Naive thymus-derived CD4-positive, alpha-beta T cell (primary cell): ENCODE measurements at regions of chr12 and their contacts with region 1.

Region 1: DNA sequence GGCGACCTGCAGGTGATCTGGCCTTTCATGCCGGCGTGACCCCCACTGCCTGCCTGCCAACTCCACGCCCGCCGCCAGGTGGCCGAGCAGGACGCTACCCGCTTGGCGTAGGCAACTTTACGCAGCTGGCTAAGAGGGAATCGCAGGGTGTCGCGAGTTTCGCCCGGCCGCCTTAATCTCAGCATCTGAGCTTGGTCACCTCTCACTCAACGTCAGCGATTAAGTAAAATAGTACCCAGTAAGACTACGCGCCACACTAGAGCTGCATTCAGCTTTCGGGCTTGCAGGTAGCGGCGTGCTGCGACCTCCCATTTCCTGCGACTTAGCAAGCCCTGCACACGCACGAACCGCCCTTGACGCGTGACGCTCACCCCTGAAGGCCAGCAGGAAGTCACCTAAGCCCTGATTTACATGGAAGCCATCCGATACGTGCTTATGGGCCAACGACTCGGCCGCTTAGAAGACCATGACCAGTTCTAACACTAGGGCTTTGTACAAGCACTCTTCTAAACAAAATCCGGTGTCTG is 33.2 kb downstream of the WBP11 start:
- DNase-seq: peak; percentile 79 to 89 (median 87)
- ATAC-seq: peak; percentile 66
- H3K4me3 ChIP-seq: peak overlapping the region; percentile 89
- H3K4me3 Mint-ChIP-seq: peak overlapping the region; percentile 91 to 100 (median 98)
- H3K27ac ChIP-seq: peak overlapping the region; percentile 96
- H3K27ac Mint-ChIP-seq: peak overlapping the region; percentile 98 to 100 (median 100)
- H3K4me1 ChIP-seq: peaks cover 11 to 28% of the 10 kb centered on the region in 2 donors
- H3K4me1 Mint-ChIP-seq: peaks cover 29 to 76% (median 57%) of the 10 kb centered on the region in 7 donors
- H3K27me3 ChIP-seq: no peaks in the 10 kb centered on the region
- H3K27me3 Mint-ChIP-seq: peaks cover 0 to 6% (median 0%) of the 10 kb centered on the region in 5 donors

Region 2: DNA sequence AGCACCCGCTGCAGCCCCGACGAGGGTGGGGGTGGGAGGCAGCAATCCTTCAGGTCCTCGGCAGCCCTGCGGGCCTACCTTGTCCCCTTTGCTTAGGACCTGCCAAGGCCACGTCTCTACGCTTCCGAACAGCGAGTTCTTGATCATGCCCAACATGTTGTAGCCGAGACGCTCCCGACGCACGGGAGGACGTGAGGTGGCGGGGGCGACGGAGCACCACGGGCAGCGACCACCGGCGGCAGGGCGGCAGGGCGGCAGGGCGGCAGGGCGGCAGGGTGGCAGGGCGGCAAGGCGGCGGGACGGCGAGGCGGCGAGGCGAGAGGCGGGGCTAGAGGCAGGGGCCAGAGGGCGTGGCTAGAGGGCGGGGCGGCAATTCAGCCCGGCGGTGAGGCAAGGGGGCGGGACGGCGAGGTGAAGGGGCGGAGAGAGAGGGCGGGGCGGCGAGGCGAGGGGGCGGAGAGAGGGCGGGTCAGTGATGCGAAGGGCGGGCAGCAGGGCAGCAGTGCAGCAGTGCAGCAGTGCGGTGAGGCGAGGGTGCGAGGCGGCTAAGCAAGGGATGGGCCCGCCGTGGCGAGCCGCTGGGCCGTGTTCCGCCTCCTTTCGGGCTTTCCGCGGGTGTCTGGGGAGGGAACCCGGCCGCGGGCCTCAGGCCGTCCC is 1769.9 kb before region 1 on chr12 and contains the start of gene HEBP1:
- CTCF ChIA-PET with region 1: no interaction called
- POLR2A ChIA-PET with region 1: no interaction called
- intact Hi-C with region 1: loop called in 1 of 2 experiments (anchors 2 kb)
- DNase-seq: peak; percentile 86 to 99 (median 93)
- ATAC-seq: peak; percentile 97
- H3K4me3 ChIP-seq: peak within 1 kb of the TSS; percentile 74
- H3K4me3 Mint-ChIP-seq: peak within 1 kb of the TSS; percentile 90 to 98 (median 95)
- H3K27ac ChIP-seq: peak within 1 kb of the TSS; percentile 83
- H3K27ac Mint-ChIP-seq: peak within 1 kb of the TSS; percentile 53 to 96 (median 90)
- H3K4me1 ChIP-seq: peaks cover 8 to 23% of the 10 kb centered on the region in 2 donors
- H3K4me1 Mint-ChIP-seq: peaks cover 30 to 45% (median 35%) of the 10 kb centered on the region in 7 donors
- H3K27me3 ChIP-seq: peaks cover 0 to 5% of the 10 kb centered on the region in 2 donors
- H3K27me3 Mint-ChIP-seq: peaks cover 0 to 31% (median 0%) of the 10 kb centered on the region in 5 donors
- total RNA-seq, gene HEBP1: 10.9 to 23.4 (median 13.6) TPM

Region 3: DNA sequence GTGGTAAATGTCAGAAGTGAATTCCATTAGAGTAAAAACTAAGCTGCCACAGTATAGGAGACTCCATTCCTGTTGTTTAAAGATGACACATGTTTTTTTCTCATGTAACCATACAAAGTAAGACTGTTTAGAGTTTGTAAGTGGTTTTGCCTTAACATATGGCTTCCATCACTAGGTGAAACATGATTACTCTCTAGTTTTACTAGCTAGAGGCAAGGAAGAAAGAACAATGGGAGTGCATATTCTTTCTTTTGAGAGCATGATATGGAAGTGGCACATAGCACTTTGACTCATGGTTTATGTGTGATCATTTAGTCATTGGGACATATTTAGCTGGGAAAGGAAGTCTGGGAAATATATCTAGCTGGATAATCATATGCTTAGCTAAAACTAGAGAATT is 396.8 kb before region 1 on chr12:
- CTCF ChIA-PET with region 1: no interaction called
- POLR2A ChIA-PET with region 1: interaction called, 12 read pairs
- intact Hi-C with region 1: no loop called
- DNase-seq: no peak
- ATAC-seq: peak; percentile 27
- H3K4me3 ChIP-seq: no peak overlapping the region
- H3K4me3 Mint-ChIP-seq: peak overlapping the region in 9 of 10 donors; percentile 10 to 81 (median 58)
- H3K27ac ChIP-seq: peak overlapping the region; percentile 31
- H3K27ac Mint-ChIP-seq: peak overlapping the region; percentile 21 to 88 (median 74)
- H3K4me1 ChIP-seq: peaks cover 35 to 41% of the 10 kb centered on the region in 2 donors
- H3K4me1 Mint-ChIP-seq: peaks cover 30 to 78% (median 71%) of the 10 kb centered on the region in 7 donors
- H3K27me3 ChIP-seq: no peaks in the 10 kb centered on the region
- H3K27me3 Mint-ChIP-seq: no peaks in the 10 kb centered on the region

Region 4: GRCh38 chr12:14723763-14724162 is 46.3 kb before region 1 on chr12:
- CTCF ChIA-PET with region 1: interaction called, 6 read pairs
- POLR2A ChIA-PET with region 1: no interaction called
- intact Hi-C with region 1: loop called in 1 of 2 experiments (anchors 1 kb)
- DNase-seq: peak; percentile 19 to 67 (median 59)
- ATAC-seq: peak; percentile 83
- H3K4me3 ChIP-seq: no peak overlapping the region
- H3K4me3 Mint-ChIP-seq: no peak overlapping the region
- H3K27ac ChIP-seq: no peak overlapping the region
- H3K27ac Mint-ChIP-seq: no peak overlapping the region
- H3K4me1 ChIP-seq: no peaks in the 10 kb centered on the region
- H3K4me1 Mint-ChIP-seq: peaks cover 0 to 4% (median 0%) of the 10 kb centered on the region in 7 donors
- H3K27me3 ChIP-seq: no peaks in the 10 kb centered on the region
- H3K27me3 Mint-ChIP-seq: peaks cover 0 to 34% (median 10%) of the 10 kb centered on the region in 5 donors

Region 5: DNA sequence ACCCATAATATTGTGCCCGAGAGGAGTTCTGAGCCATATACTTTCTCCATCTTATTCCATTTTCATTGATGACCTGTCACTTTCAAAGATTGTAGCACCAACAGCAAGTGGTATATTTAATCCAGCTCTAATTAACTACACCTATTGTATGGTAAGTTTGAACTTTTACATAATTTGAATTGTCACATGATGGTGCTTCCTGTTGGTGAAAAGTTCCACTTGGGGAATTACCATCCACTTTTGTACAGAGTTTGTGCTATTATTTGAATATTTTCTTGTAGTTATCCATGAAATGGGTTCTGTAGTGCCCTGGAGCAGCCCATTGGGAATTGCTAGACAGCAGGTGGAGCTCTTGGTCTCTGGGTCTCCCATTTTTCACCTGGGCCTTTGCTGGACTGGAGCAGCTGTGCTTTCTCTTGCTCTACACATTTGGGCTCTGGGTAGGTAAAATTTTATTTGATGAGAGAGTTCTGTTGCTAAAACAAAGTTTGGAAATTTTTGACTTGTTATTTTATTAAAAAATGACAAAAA is 41.0 kb after region 1 on chr12:
- CTCF ChIA-PET with region 1: interaction called, 8 read pairs
- POLR2A ChIA-PET with region 1: interaction called, 316 read pairs
- intact Hi-C with region 1: no loop called
- DNase-seq: peak in 1 of 9 donors; percentile 15
- ATAC-seq: peak; percentile 26
- H3K4me3 ChIP-seq: no peak overlapping the region
- H3K4me3 Mint-ChIP-seq: peak overlapping the region in 1 of 10 donors; percentile 6
- H3K27ac ChIP-seq: no peak overlapping the region
- H3K27ac Mint-ChIP-seq: no peak overlapping the region
- H3K4me1 ChIP-seq: peaks cover 0 to 7% of the 10 kb centered on the region in 2 donors
- H3K4me1 Mint-ChIP-seq: peaks cover 4 to 16% (median 14%) of the 10 kb centered on the region in 7 donors
- H3K27me3 ChIP-seq: no peaks in the 10 kb centered on the region
- H3K27me3 Mint-ChIP-seq: peaks cover 0 to 5% (median 0%) of the 10 kb centered on the region in 5 donors

Region 6: GRCh38 chr12:14995583-14996425 is 225.8 kb after region 1 on chr12:
- CTCF ChIA-PET with region 1: interaction called, 3 read pairs
- POLR2A ChIA-PET with region 1: interaction called, 29 read pairs
- intact Hi-C with region 1: no loop called
- DNase-seq: peak in 7 of 9 donors; percentile 27 to 76 (median 58)
- ATAC-seq: peak; percentile 84
- H3K4me3 ChIP-seq: no peak overlapping the region
- H3K4me3 Mint-ChIP-seq: peak overlapping the region in 8 of 10 donors; percentile 9 to 73 (median 62)
- H3K27ac ChIP-seq: peak overlapping the region; percentile 14
- H3K27ac Mint-ChIP-seq: peak overlapping the region; percentile 6 to 93 (median 88)
- H3K4me1 ChIP-seq: peaks cover 16 to 27% of the 10 kb centered on the region in 2 donors
- H3K4me1 Mint-ChIP-seq: peaks cover 21 to 35% (median 31%) of the 10 kb centered on the region in 7 donors
- H3K27me3 ChIP-seq: peaks cover 0 to 4% of the 10 kb centered on the region in 2 donors
- H3K27me3 Mint-ChIP-seq: peaks cover 0 to 32% (median 0%) of the 10 kb centered on the region in 5 donors

Region 7: GRCh38 chr12:15789220-15790171 is 1019.5 kb after region 1 on chr12 and contains the start of gene EPS8:
- CTCF ChIA-PET with region 1: no interaction called
- POLR2A ChIA-PET with region 1: no interaction called
- intact Hi-C with region 1: loop called in 1 of 2 experiments (anchors 10 kb)
- DNase-seq: peak; percentile 82 to 92 (median 91)
- ATAC-seq: peak; percentile 95
- H3K4me3 ChIP-seq: peak within 1 kb of the TSS; percentile 78
- H3K4me3 Mint-ChIP-seq: peak within 1 kb of the TSS; percentile 91 to 99 (median 96)
- H3K27ac ChIP-seq: peak within 1 kb of the TSS; percentile 63
- H3K27ac Mint-ChIP-seq: peak within 1 kb of the TSS; percentile 58 to 97 (median 84)
- H3K4me1 ChIP-seq: peaks cover 0 to 7% of the 10 kb centered on the region in 2 donors
- H3K4me1 Mint-ChIP-seq: peaks cover 10 to 17% (median 15%) of the 10 kb centered on the region in 7 donors
- H3K27me3 ChIP-seq: peaks cover 0 to 11% of the 10 kb centered on the region in 2 donors
- H3K27me3 Mint-ChIP-seq: peaks cover 26 to 74% (median 49%) of the 10 kb centered on the region in 5 donors
- total RNA-seq, gene EPS8: 2.0 to 3.1 (median 2.7) TPM